CD8-positive, alpha-beta T cell (primary cell): ENCODE measurements at regions of chr19 and their contacts with region 1.

Region 1: DNA sequence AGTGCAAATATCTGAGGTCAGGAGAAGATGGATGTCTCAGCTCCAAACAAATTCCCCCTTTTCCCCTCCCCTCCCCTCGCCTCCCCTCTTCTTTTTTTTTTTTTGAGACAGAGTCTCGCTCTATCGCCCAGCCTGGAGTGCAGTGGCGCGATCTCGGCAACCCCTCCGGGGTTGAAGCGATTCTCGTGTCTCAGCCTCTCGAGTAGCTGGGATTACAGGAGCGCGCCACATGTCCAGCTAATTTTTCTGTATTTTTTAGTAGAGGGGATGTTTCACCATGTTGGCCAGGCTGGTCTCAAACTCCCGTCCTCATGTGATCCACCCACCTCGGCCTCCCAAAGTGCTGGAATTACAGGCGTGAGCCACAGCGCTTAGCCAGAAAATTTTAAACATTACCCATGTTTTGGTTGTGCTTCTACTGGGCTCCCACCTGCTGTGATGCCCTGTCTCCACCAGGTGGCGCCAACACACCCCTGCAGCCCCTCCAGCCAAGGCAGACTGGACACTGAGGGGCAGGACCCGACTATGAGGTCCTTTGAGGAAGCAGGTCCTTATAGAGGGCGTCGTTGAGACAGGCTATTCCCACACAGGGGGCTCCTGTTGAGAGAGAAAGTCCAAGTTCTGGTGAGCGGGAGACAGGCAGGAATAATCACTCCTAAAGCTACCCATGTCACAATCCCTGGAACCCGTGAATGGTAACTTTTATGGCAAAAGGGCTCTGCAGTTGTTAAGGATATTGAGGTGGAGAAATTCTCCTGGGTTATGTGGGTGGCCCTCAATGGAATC is 6.3 kb downstream of the ERICH4 start:
- DNase-seq: peak; percentile 49 to 86 (median 71)
- ATAC-seq: peak; percentile 87
- H3K4me3 ChIP-seq: peak overlapping the region; percentile 23 to 37
- H3K4me3 Mint-ChIP-seq: peak overlapping the region; percentile 73
- H3K27ac ChIP-seq: no peak overlapping the region
- H3K27ac Mint-ChIP-seq: no peak overlapping the region
- H3K4me1 ChIP-seq: peaks cover 5% of the 10 kb centered on the region
- H3K4me1 Mint-ChIP-seq: peaks cover 5% of the 10 kb centered on the region
- H3K27me3 ChIP-seq: peaks cover 0 to 8% of the 10 kb centered on the region in 2 experiments
- H3K27me3 Mint-ChIP-seq: peaks cover 13% of the 10 kb centered on the region
- CTCF ChIP-seq: peak; percentile 99

Region 2: DNA sequence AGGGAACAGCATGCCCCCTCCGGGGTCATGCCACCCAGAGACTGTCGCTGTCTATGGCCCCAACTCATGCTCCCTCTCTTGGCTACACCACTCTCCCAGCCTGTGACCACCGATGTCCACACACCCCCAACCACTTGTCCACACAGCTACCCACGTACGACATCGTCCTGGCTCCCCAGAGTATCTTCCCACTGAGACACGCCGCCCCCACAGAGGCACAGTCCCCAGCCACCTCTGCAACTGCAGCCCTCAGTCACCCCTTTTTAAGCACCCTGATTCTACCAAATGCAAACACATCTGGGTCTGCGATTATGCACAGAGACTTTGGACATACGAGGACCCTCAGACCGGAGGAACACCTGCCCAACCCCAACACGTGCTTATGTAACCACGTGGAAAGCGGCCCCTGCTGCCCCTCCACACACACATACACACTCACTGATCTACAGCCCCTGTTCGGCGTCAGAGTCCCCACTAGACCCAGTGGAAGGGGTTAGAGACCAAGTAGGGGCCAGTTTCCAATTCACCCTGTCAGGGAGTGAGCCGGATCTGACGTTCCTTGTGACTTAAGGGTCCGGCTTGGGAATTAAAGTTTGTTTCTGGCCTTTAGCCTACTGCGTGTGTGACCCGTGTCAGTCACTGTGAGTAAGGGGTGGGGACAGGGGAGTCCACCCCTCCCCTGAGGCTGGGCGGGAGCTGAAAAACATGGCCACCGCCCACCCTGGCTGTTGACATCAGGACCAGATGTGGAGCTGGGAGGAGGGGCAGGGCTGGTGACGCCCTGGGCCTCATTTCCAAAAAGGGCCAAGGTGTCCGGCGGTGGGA is 242.1 kb before region 1 on chr19:
- CTCF ChIA-PET with region 1: interaction called, 7 read pairs
- POLR2A ChIA-PET with region 1: no interaction called
- intact Hi-C with region 1: loop called in 1 of 2 experiments (anchors 2 kb)
- DNase-seq: no peak
- ATAC-seq: no peak
- H3K4me3 ChIP-seq: no peak overlapping the region
- H3K4me3 Mint-ChIP-seq: no peak overlapping the region
- H3K27ac ChIP-seq: no peak overlapping the region
- H3K27ac Mint-ChIP-seq: no peak overlapping the region
- H3K4me1 ChIP-seq: no peaks in the 10 kb centered on the region
- H3K4me1 Mint-ChIP-seq: peaks cover 6% of the 10 kb centered on the region
- H3K27me3 ChIP-seq: no peaks in the 10 kb centered on the region
- H3K27me3 Mint-ChIP-seq: no peaks in the 10 kb centered on the region
- CTCF ChIP-seq: no peak

Region 3: GRCh38 chr19:41521931-41522555 is 72.8 kb after region 1 on chr19:
- CTCF ChIA-PET with region 1: interaction called, 3 read pairs
- POLR2A ChIA-PET with region 1: no interaction called
- intact Hi-C with region 1: loop called (anchors 1 kb)
- DNase-seq: peak in 8 of 9 experiments; percentile 24 to 76 (median 53)
- ATAC-seq: peak; percentile 71
- H3K4me3 ChIP-seq: peak overlapping the region; percentile 39 to 43
- H3K4me3 Mint-ChIP-seq: peak overlapping the region; percentile 85
- H3K27ac ChIP-seq: peak overlapping the region; percentile 49 to 62
- H3K27ac Mint-ChIP-seq: peak overlapping the region; percentile 64
- H3K4me1 ChIP-seq: peaks cover 10% of the 10 kb centered on the region
- H3K4me1 Mint-ChIP-seq: peaks cover 19% of the 10 kb centered on the region
- H3K27me3 ChIP-seq: no peaks in the 10 kb centered on the region
- H3K27me3 Mint-ChIP-seq: peaks cover 52% of the 10 kb centered on the region
- CTCF ChIP-seq: no peak

Region 4: GRCh38 chr19:41541990-41542584 is 92.8 kb after region 1 on chr19:
- CTCF ChIA-PET with region 1: interaction called, 14 read pairs
- POLR2A ChIA-PET with region 1: interaction called, 3 read pairs
- intact Hi-C with region 1: no loop called
- DNase-seq: peak; percentile 55 to 89 (median 83)
- ATAC-seq: no peak
- H3K4me3 ChIP-seq: no peak overlapping the region
- H3K4me3 Mint-ChIP-seq: no peak overlapping the region
- H3K27ac ChIP-seq: no peak overlapping the region
- H3K27ac Mint-ChIP-seq: no peak overlapping the region
- H3K4me1 ChIP-seq: peaks cover 46% of the 10 kb centered on the region
- H3K4me1 Mint-ChIP-seq: peaks cover 43% of the 10 kb centered on the region
- H3K27me3 ChIP-seq: no peaks in the 10 kb centered on the region
- H3K27me3 Mint-ChIP-seq: peaks cover 4% of the 10 kb centered on the region
- CTCF ChIP-seq: peak; percentile 73